Heart left ventricle (tissue), 16 donors: ENCODE measurements at regions of chr20 and their contacts with region 1.

Region 1: DNA sequence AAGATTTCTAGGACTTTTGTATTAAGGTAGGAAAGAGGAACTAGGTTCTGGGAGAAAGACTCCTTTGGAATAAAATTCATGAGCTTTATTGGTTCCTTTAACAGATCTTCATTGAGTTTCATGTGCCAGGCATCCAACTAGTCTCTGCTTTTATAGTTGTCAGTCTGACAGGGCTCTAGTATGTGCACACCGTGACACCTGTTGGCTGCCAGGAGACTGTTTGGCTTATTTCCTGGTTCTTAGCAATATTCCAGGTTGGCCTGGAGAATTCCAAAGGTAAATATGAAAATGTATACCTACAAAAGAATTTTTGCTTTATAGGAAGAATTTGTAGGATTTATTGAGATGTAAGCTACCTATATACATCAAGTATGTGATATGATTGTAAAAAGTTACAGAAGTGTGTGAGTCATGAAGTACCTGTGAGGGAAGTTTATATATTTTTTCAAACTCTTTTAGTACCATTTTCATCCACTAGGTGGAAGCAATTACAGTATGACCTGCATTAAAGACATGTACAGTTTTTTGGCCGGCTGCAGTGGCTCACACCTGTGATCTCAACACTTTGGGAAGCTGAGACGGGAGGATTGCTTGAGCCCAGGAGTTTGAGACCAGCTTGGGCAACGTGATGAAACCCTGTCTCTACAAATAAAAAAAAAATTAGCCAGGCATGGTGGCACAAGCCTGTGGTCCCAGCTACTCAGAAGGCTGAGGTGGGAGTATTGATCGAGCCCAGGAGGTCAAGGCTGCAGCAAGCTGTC is 35.2 kb downstream of the NDUFAF5 start:
- DNase-seq: peak in 1 of 5 donors; percentile 44
- ATAC-seq: peak in 3 of 4 donors; percentile 56 to 66 (median 60)
- H3K4me3 ChIP-seq: no peak overlapping the region
- H3K27ac ChIP-seq: no peak overlapping the region
- H3K4me1 ChIP-seq: no peaks in the 10 kb centered on the region
- H3K27me3 ChIP-seq: no peaks in the 10 kb centered on the region
- CTCF ChIP-seq: peak; percentile 43 to 77 (median 65)
- POLR2A ChIP-seq: no peak

Region 2: GRCh38 chr20:13671916-13672378 is 148.1 kb before region 1 on chr20:
- intact Hi-C with region 1: no loop called
- DNase-seq: peak in 4 of 5 donors; percentile 26 to 43 (median 34)
- ATAC-seq: peak; percentile 56 to 91 (median 79)
- H3K4me3 ChIP-seq: no peak overlapping the region
- H3K27ac ChIP-seq: peak overlapping the region in 7 of 12 donors; percentile 8 to 79 (median 38)
- H3K4me1 ChIP-seq: peaks cover 0 to 14% (median 3%) of the 10 kb centered on the region in 12 donors
- H3K27me3 ChIP-seq: no peaks in the 10 kb centered on the region
- CTCF ChIP-seq: no peak
- POLR2A ChIP-seq: no peak

Region 3: GRCh38 chr20:13947719-13948118 is 127.7 kb after region 1 on chr20:
- intact Hi-C with region 1: loop called in 4 of 10 experiments (anchors 5 to 10 kb)
- DNase-seq: no peak
- ATAC-seq: no peak
- H3K4me3 ChIP-seq: no peak overlapping the region
- H3K27ac ChIP-seq: no peak overlapping the region
- H3K4me1 ChIP-seq: no peaks in the 10 kb centered on the region
- H3K27me3 ChIP-seq: no peaks in the 10 kb centered on the region
- CTCF ChIP-seq: no peak
- POLR2A ChIP-seq: no peak

Region 4: GRCh38 chr20:13953227-13953626 is 133.2 kb after region 1 on chr20:
- intact Hi-C with region 1: loop called in 4 of 10 experiments (anchors 5 to 10 kb)
- DNase-seq: no peak
- ATAC-seq: no peak
- H3K4me3 ChIP-seq: no peak overlapping the region
- H3K27ac ChIP-seq: no peak overlapping the region
- H3K4me1 ChIP-seq: no peaks in the 10 kb centered on the region
- H3K27me3 ChIP-seq: no peaks in the 10 kb centered on the region
- CTCF ChIP-seq: no peak
- POLR2A ChIP-seq: no peak

Region 5: DNA sequence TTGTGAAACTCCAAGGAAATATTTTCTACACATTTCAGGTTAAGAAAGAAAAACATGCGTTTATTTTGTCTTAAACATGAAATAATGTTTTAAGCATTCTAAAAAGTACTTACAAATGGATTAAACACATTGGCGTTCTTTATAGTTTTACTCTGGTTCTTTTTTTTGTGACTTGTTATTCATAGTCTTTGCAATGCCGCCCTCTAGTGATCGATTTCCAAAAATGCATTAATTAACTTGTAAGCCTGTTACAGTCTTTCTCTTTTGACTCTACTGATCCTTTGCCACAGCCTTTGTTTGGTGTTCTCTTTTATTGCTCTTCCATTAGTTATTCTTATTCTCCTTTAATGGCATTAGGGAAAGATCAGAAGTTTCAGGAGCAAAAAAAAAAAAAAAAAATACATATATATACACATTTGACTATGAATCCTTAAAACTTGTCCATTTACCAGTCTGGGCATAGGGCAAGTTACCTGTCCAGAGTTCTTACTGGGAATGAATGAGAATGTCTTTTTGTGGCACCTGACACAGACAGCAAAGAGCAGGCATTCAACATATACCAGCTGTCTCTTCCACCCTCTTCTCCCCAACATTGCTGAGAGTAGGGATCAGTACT is 235.2 kb after region 1 on chr20:
- intact Hi-C with region 1: loop called (anchors 1 to 5 kb)
- DNase-seq: no peak
- ATAC-seq: no peak
- H3K4me3 ChIP-seq: no peak overlapping the region
- H3K27ac ChIP-seq: no peak overlapping the region
- H3K4me1 ChIP-seq: no peaks in the 10 kb centered on the region
- H3K27me3 ChIP-seq: no peaks in the 10 kb centered on the region
- CTCF ChIP-seq: peak; percentile 41 to 73 (median 59)
- POLR2A ChIP-seq: no peak